Activated CD8-positive, alpha-beta T cell treated with anti-CD3 and anti-CD28 coated beads for 36 hours (primary cell): ENCODE measurements at regions of chr5 and their contacts with region 1.

Region 1: DNA sequence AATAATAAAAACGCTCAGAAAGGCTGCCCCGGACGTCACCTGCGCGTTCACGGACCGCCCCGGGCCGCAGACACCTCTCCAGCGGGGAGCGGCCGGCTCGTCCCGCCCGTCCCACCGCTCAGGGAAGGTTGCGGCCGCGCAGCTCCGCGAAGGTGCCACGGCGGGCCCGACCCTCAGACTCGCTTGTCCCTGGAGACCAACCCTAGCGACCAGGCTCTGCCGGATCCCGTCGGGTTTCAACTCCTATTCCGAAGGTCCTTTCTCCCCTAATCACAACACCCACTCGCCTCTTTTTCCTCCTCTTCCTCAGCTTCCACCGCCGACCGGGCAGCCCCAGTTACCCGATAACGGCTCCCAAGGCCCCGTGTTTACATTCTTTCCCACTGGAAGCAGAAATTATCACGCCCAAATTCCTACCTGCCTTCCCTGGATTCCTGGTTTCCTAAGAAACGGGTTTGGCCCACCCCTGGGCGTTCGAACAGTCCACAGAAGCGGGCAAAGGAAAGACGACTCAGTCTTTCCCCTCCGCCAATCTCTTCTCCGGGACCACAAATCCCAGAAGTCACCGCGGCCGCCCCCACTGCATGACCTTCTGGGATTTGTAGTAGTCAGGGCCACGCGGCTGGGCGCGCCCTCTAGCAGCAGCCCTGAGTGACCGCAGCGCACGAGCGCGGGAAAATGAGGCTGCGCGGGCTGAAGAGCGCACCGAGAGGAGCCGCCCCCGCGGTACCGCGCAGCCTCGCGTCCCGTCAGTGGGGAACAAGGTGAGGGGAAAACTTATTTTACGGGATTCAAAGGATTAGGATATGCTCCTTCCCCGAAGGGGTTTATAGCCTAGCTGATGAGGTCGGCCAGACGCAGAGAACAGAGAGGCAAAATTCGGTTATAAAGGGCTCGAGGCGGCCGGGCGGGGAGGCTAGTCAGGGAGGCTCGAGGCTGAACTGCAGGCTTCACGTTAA is at the start of gene TTC33:
- DNase-seq: peak; percentile 99
- ATAC-seq: peak; percentile 91
- H3K4me3 Mint-ChIP-seq: no peak within 1 kb of the TSS
- H3K27ac Mint-ChIP-seq: no peak within 1 kb of the TSS
- H3K4me1 Mint-ChIP-seq: peaks cover 16% of the 10 kb centered on the region
- H3K27me3 Mint-ChIP-seq: no peaks in the 10 kb centered on the region
- CTCF ChIP-seq: no peak
- total RNA-seq, gene TTC33: 21.4 to 21.5 TPM

Region 2: DNA sequence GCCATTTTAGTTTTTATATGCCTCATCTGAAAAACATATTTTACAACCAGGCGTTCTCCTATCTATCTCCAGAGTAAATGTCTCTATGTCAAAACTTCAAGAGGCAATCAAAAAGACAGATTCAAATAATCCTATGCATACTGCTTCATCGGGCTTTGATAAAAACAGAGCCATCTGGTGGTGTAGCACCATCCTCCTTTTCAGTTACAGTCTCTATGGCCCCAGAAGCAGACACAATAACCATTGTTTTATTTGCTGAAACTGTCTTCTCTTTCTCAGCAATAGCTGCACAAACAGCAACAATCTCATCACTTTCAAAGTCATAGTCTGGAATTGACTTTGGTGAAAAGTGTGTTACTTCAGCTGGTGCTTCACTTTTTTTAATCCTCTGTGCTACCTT is 39.7 kb before region 1 on chr5:
- CTCF ChIA-PET with region 1: no interaction called
- POLR2A ChIA-PET with region 1: no interaction called
- intact Hi-C with region 1: no loop called
- DNase-seq: no peak
- ATAC-seq: no peak
- H3K4me3 Mint-ChIP-seq: no peak overlapping the region
- H3K27ac Mint-ChIP-seq: no peak overlapping the region
- H3K4me1 Mint-ChIP-seq: peaks cover 14% of the 10 kb centered on the region
- H3K27me3 Mint-ChIP-seq: no peaks in the 10 kb centered on the region
- CTCF ChIP-seq: no peak

Region 3: DNA sequence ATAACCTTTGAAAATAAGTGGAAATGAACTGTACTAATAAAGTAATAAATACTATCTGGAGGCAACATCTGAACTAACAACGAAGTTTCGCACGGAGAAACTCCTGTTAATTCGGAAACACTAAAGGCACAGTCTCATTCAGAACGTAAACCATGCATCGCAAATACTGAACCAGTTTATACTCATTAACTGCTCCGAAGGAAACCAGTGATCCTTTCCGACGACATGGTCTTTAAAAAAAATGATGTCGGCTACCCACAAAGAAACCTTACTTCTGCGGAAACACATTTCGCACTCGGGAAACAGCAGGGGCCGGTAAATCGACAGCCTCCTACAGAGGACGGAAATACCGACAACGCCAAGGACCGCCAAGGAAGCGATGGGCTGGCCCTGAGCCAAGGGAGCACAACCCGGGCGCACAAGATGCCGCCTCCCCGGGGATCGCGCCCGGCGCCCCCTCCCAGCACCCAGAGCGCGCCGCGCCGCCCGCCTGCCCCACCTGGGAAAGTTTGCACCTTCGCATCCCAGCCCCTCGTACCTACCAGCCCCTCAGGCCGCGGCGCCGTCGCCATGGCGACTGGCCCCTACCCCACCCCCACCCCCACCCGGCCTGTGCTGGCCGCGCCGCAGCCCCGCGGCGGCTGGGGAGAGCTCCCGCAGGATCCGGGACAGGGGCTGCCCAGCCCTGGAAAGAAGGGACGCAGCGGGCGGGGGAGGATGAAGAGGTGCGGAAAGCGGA is 41.8 kb after region 1 on chr5:
- CTCF ChIA-PET with region 1: no interaction called
- POLR2A ChIA-PET with region 1: interaction called, 4 read pairs
- intact Hi-C with region 1: loop called (anchors 2 kb)
- DNase-seq: peak; percentile 85
- ATAC-seq: peak; percentile 44
- H3K4me3 Mint-ChIP-seq: peak overlapping the region; percentile 89
- H3K27ac Mint-ChIP-seq: peak overlapping the region; percentile 84
- H3K4me1 Mint-ChIP-seq: peaks cover 42% of the 10 kb centered on the region
- H3K27me3 Mint-ChIP-seq: peaks cover 4% of the 10 kb centered on the region
- CTCF ChIP-seq: no peak

Region 4: GRCh38 chr5:40834849-40835787 is 79.4 kb after region 1 on chr5 and contains the start of gene RPL37:
- CTCF ChIA-PET with region 1: interaction called, 3 read pairs
- POLR2A ChIA-PET with region 1: interaction called, 8 read pairs
- intact Hi-C with region 1: loop called (anchors 10 kb)
- DNase-seq: peak; percentile 96
- ATAC-seq: peak; percentile 96
- H3K4me3 Mint-ChIP-seq: peak within 1 kb of the TSS; percentile 93
- H3K27ac Mint-ChIP-seq: peak within 1 kb of the TSS; percentile 100
- H3K4me1 Mint-ChIP-seq: peaks cover 36% of the 10 kb centered on the region
- H3K27me3 Mint-ChIP-seq: no peaks in the 10 kb centered on the region
- CTCF ChIP-seq: no peak
- total RNA-seq, gene RPL37: 1,914 to 1,950 TPM

Region 5: GRCh38 chr5:40879163-40879942 is 123.7 kb after region 1 on chr5:
- CTCF ChIA-PET with region 1: no interaction called
- POLR2A ChIA-PET with region 1: no interaction called
- intact Hi-C with region 1: loop called (anchors 5 kb)
- DNase-seq: no peak
- ATAC-seq: peak; percentile 64
- H3K4me3 Mint-ChIP-seq: no peak overlapping the region
- H3K27ac Mint-ChIP-seq: no peak overlapping the region
- H3K4me1 Mint-ChIP-seq: no peaks in the 10 kb centered on the region
- H3K27me3 Mint-ChIP-seq: peaks cover 3% of the 10 kb centered on the region
- CTCF ChIP-seq: peak; percentile 79